Heart left ventricle (tissue), 16 donors: ENCODE measurements at regions of chr14 and their contacts with region 1.

Region 1: GRCh38 chr14:22653012-22653621 is 9.0 kb upstream of the OR6J1 start:
- DNase-seq: peak in 4 of 5 donors; percentile 31 to 53 (median 48)
- ATAC-seq: peak in 3 of 4 donors; percentile 81 to 89 (median 86)
- H3K4me3 ChIP-seq: no peak overlapping the region
- H3K27ac ChIP-seq: no peak overlapping the region
- H3K4me1 ChIP-seq: peaks cover 0 to 2% (median 0%) of the 10 kb centered on the region in 12 donors
- H3K27me3 ChIP-seq: no peaks in the 10 kb centered on the region
- CTCF ChIP-seq: peak; percentile 65 to 80 (median 70)
- POLR2A ChIP-seq: no peak

Region 2: GRCh38 chr14:22570132-22570949 is 82.8 kb before region 1 on chr14:
- intact Hi-C with region 1: loop called (anchors 1 to 5 kb)
- DNase-seq: peak in 3 of 5 donors; percentile 52 to 78 (median 77)
- ATAC-seq: peak; percentile 47 to 81 (median 72)
- H3K4me3 ChIP-seq: peak overlapping the region in 1 of 12 donors; percentile 23
- H3K27ac ChIP-seq: peak overlapping the region in 5 of 12 donors; percentile 9 to 83 (median 30)
- H3K4me1 ChIP-seq: peaks cover 0 to 48% (median 8%) of the 10 kb centered on the region in 12 donors
- H3K27me3 ChIP-seq: no peaks in the 10 kb centered on the region
- CTCF ChIP-seq: peak; percentile 70 to 86 (median 78)
- POLR2A ChIP-seq: no peak

Region 3: GRCh38 chr14:22715186-22715812 is 62.2 kb after region 1 on chr14:
- intact Hi-C with region 1: no loop called
- DNase-seq: no peak
- ATAC-seq: no peak
- H3K4me3 ChIP-seq: no peak overlapping the region
- H3K27ac ChIP-seq: no peak overlapping the region
- H3K4me1 ChIP-seq: peaks cover 0 to 9% (median 0%) of the 10 kb centered on the region in 12 donors
- H3K27me3 ChIP-seq: peaks cover 0 to 27% (median 6%) of the 10 kb centered on the region in 9 donors
- CTCF ChIP-seq: no peak
- POLR2A ChIP-seq: no peak

Region 4: DNA sequence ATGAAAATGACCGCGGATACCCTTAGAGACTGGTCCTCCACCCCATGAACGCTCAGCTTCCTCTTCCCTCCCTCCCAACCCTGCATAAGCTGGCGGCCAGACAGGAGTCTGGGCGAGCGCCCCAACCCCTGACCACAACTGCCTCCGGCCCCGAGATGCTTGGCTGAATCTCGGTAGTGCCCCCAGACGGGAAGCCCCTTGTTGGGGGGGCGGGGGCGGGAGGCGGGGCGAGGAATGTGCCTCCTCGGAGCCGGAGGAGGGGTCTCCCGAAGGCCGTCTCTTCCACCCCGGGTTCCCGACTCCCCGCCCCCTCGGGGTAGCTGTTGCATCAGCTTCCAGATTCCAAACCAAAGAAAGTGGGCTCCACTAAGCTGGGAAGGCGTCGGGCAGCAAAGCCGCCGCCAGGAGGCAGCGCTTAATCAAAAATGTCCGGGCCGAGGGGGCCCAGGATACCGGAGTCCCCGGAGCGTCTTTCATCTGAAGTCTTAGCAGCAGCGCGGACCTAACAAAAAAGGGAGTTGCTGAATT is 169.5 kb after region 1 on chr14:
- intact Hi-C with region 1: loop called in 6 of 10 experiments (anchors 5 to 10 kb)
- DNase-seq: peak; percentile 72 to 86 (median 79)
- ATAC-seq: peak; percentile 76 to 91 (median 85)
- H3K4me3 ChIP-seq: peak overlapping the region in 11 of 12 donors; percentile 14 to 59 (median 51)
- H3K27ac ChIP-seq: peak overlapping the region in 7 of 12 donors; percentile 11 to 70 (median 24)
- H3K4me1 ChIP-seq: peaks cover 0 to 54% (median 21%) of the 10 kb centered on the region in 12 donors
- H3K27me3 ChIP-seq: no peaks in the 10 kb centered on the region
- CTCF ChIP-seq: peak; percentile 71 to 98 (median 92)
- POLR2A ChIP-seq: no peak

Region 5: DNA sequence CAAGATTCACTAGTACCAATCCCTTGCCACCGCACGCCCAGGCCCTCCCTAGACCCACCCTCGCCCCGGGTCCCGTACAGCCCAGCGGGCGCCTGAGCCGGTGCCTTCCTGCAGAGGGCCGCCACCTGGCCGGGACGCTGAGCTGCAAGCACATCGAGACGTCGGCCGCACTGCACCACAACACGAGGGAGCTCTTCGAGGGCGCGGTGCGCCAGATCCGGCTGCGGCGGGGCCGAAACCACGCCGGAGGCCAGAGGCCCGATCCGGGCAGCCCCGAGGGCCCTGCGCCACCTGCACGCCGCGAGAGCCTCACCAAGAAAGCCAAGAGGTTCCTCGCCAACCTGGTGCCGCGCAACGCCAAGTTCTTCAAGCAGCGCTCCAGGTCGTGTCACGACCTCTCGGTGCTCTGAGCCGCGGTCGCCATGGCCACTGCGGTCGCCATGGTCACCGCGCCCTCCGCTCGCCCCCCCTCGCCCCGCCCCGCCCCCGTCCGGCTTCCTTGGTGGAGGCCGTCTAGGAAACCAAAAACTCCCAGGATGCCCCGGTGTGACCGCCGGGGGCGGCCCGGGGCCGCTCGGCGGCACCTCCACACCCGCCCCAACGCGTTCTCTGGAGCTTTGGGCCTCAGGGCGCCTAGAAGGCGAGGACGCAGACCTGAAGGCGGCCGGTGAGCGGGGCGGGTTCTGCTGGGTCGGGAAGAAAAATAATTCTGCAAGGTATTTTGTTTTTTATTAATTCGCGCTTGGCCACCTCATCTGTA is 233.6 kb after region 1 on chr14:
- intact Hi-C with region 1: no loop called
- DNase-seq: peak; percentile 62 to 81 (median 72)
- ATAC-seq: peak; percentile 25 to 85 (median 78)
- H3K4me3 ChIP-seq: peak overlapping the region; percentile 33 to 73 (median 60)
- H3K27ac ChIP-seq: peak overlapping the region in 5 of 12 donors; percentile 2 to 71 (median 39)
- H3K4me1 ChIP-seq: peaks cover 0 to 28% (median 9%) of the 10 kb centered on the region in 12 donors
- H3K27me3 ChIP-seq: no peaks in the 10 kb centered on the region
- CTCF ChIP-seq: no peak
- POLR2A ChIP-seq: peak in 1 of 2 donors; percentile 17